ENCODE measurements at regions of chr1 and their contacts with region 1.

Region 1: DNA sequence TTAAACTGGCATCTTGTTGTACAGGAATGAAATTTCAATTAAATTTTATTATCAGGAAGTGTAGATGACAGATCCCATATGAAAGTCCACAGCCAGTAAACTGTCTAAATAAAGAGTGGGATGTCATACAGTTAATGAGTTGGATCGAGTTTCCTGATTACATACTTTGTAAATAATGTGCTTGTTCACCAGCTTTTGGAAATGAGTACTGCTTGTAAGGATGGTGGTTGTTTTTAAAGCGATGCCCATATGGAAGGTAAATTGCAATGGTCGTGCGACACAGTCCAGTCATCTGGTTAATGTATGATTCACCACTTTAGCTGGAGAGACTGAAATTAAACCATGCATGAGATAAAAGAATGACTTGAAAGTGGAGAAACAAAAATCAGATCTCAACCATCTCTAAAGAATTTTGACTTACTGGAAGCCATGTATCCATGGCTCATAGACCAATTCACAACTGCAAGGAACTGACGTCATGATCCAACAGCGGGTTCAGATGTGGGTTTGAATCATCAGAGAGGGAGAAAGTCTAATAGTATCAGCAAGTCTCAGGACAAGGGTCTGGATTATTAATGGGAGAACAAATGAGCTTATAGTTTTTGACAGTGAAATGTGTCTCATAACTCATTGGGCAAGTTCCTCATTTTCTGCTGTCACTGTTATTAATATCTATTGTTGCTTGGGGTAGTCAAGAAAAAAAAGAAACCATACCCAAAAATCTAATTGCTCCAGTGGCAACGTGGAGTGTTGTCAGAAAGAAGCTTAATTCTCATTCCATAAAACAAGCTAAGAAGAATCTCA is 49.0 kb downstream of the MAP10 start:
- DNase-seq: no peak
- ATAC-seq: no peak
- H3K4me3 ChIP-seq: no peak overlapping the region
- H3K27ac ChIP-seq: no peak overlapping the region
- H3K4me1 ChIP-seq: no peaks in the 10 kb centered on the region
- H3K27me3 ChIP-seq: no peaks in the 10 kb centered on the region
- CTCF ChIP-seq: no peak
- EP300 ChIP-seq: no peak
- POLR2A ChIP-seq: no peak
- RAD21 ChIP-seq: no peak

Region 2: GRCh38 chr1:232805269-232806185 is 48.7 kb before region 1 on chr1 and contains the start of gene MAP10:
- CTCF ChIA-PET with region 1: no interaction called
- POLR2A ChIA-PET with region 1: no interaction called
- in situ Hi-C with region 1: no loop called
- intact Hi-C with region 1: loop called (anchors 5 kb)
- DNase-seq: peak; percentile 25 to 79 (median 58)
- ATAC-seq: peak; percentile 92
- H3K4me3 ChIP-seq: peak within 1 kb of the TSS; percentile 59
- H3K27ac ChIP-seq: no peak within 1 kb of the TSS; the same call in 2 of the 3 replicates
- H3K4me1 ChIP-seq: peaks cover 3 to 10% of the 10 kb centered on the region in 2 experiments; a peak in 3 of 5 replicates
- H3K27me3 ChIP-seq: peaks cover 2 to 6% of the 10 kb centered on the region in 2 experiments; a peak in 2 of 5 replicates
- CTCF ChIP-seq: peak in 1 of 3 experiments; percentile 9; a peak in 1 of 6 replicates
- EP300 ChIP-seq: no peak
- POLR2A ChIP-seq: peak; percentile 65
- RAD21 ChIP-seq: no peak
- polyA plus RNA-seq, gene MAP10: 0.11 to 0.13 TPM

Region 3: GRCh38 chr1:233394860-233395717 is 540.9 kb after region 1 on chr1:
- CTCF ChIA-PET with region 1: no interaction called
- POLR2A ChIA-PET with region 1: no interaction called
- in situ Hi-C with region 1: no loop called
- intact Hi-C with region 1: no loop called
- DNase-seq: peak; percentile 47 to 65 (median 52)
- ATAC-seq: peak; percentile 98
- H3K4me3 ChIP-seq: no peak overlapping the region
- H3K27ac ChIP-seq: no peak overlapping the region
- H3K4me1 ChIP-seq: no peaks in the 10 kb centered on the region; a peak in 1 of 5 replicates
- H3K27me3 ChIP-seq: no peaks in the 10 kb centered on the region
- CTCF ChIP-seq: peak; percentile 80 to 91 (median 83)
- EP300 ChIP-seq: no peak
- POLR2A ChIP-seq: no peak
- RAD21 ChIP-seq: peak; percentile 94 to 95